Caco-2 (cell line): ENCODE measurements at regions of chr12 and their contacts with region 1.

Region 1: GRCh38 chr12:2845280-2845679 is 10.4 kb upstream of the NRIP2 start:
- DNase-seq: no peak
- H3K4me3 ChIP-seq: no peak overlapping the region
- H3K4me3 Mint-ChIP-seq: no peak overlapping the region
- H3K27ac Mint-ChIP-seq: peak overlapping the region; percentile 12
- H3K4me1 ChIP-seq: peaks cover 24% of the 10 kb centered on the region
- H3K4me1 Mint-ChIP-seq: peaks cover 28% of the 10 kb centered on the region
- H3K27me3 ChIP-seq: no peaks in the 10 kb centered on the region
- H3K27me3 Mint-ChIP-seq: no peaks in the 10 kb centered on the region
- CTCF ChIP-seq: no peak

Region 2: DNA sequence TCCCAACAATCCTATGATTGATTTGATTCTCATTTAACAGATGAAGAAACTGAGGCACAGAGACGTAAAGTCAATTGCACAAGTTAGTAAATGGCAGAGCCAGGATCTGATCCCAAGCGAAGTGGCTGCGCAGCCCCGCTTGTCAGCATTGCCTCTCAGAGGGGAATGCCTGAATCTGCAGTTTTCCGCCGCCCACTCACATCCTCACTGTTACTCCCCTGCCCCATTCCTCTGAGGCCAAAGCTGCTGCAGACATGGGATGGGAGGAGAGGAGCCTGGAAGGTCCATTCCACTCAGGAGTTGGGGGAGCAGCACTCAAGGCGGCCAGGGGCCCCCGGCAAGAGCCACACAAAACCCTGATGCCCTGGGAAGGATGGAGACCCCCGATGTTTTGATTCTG is 11.5 kb before region 1 on chr12:
- CTCF ChIA-PET with region 1: interaction called, 10 read pairs
- POLR2A ChIA-PET with region 1: no interaction called
- intact Hi-C with region 1: no loop called
- DNase-seq: no peak
- H3K4me3 ChIP-seq: no peak overlapping the region
- H3K4me3 Mint-ChIP-seq: no peak overlapping the region
- H3K27ac Mint-ChIP-seq: no peak overlapping the region
- H3K4me1 ChIP-seq: no peaks in the 10 kb centered on the region
- H3K4me1 Mint-ChIP-seq: no peaks in the 10 kb centered on the region
- H3K27me3 ChIP-seq: no peaks in the 10 kb centered on the region
- H3K27me3 Mint-ChIP-seq: peaks cover 5% of the 10 kb centered on the region
- CTCF ChIP-seq: no peak

Region 3: DNA sequence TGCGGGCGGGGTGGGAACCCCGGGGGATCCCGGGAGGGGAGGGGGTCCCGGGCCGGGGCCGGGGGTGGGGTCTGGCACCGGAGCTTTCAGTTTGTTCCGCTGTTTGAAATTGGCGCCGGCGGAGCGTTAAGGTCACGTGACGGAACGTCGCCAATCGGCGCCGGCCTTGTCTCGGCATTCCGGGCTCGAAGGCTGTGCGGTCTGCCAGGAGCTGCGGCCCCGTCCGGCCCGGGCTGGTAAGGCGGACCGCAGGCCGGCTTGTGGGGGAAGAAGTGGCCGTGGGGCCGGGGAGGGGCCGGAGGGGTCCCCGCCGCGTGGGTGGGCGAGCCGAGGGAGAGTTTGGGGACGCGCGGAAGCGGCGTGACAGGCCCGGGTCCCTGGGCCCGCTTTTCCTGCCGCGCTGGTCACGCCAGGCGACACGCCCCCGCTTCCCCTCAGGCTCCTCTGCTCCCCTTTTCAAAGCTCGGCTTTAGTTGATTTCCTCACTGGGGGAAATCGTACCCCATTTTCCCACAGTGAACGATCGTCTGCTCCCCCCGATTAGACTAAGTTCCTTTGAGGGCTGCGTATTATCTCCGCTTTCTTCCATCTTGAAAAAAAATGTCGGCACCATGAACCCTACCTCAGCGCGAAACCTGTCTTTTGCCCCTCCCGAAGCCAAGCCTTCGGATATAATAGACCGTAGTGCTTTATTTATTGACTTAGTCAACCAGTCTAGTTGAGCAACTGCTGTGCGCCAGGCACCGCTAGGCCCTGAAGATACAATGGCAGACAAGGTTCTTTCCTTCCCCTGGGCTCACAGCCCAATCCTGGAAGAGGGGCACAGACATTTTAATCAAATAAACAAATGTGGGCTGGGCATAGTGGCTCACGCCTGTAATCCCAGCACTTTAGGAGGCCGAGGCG is 32.0 kb after region 1 on chr12 and contains the starts of genes FOXM1 and RHNO1:
- CTCF ChIA-PET with region 1: interaction called, 14 read pairs
- POLR2A ChIA-PET with region 1: interaction called, 4 read pairs
- intact Hi-C with region 1: loop called (anchors 2 kb)
- DNase-seq: peak; percentile 94 to 97
- H3K4me3 ChIP-seq: peak within 1 kb of the TSS; percentile 96
- H3K4me3 Mint-ChIP-seq: peak within 1 kb of the TSS; percentile 75
- H3K27ac Mint-ChIP-seq: peak within 1 kb of the TSS; percentile 99
- H3K4me1 ChIP-seq: peaks cover 28% of the 10 kb centered on the region
- H3K4me1 Mint-ChIP-seq: peaks cover 31% of the 10 kb centered on the region
- H3K27me3 ChIP-seq: no peaks in the 10 kb centered on the region
- H3K27me3 Mint-ChIP-seq: no peaks in the 10 kb centered on the region
- CTCF ChIP-seq: peak in 1 of 2 experiments; percentile 28
- total RNA-seq, gene FOXM1: 217 and 222 TPM in 2 replicates
- total RNA-seq, gene RHNO1: 99.1 and 99.8 TPM in 2 replicates

Region 4: DNA sequence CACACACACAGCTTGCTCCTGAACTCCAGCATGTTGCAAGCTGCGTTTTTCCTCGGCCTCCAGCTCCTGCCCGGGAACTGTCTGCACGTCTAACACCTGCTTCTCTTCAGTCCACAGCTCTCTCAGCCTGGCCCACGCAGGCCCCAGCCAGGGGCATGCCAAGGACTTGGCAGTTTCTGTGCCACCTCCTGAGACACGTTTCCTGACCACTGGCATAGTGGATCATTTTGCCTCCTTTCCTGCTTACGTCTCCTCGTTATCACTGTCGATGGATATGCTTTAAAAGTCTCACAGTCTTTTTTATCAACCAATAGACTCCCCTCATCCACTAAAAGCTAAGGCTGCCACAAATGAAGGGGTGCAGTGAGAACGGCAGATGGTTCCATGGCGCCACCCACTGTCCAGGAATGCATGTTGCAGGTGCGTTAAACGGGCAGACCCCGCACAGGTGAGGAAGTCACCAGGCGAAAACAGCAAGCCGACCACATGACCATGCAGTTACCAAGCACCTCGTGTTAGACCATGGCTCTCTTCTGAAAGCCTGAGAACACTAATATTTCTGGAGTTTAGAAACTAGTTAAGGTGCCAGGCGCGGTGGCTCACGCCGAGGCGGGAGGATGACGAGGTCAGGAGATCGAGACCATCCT is 99.2 kb after region 1 on chr12:
- CTCF ChIA-PET with region 1: interaction called, 13 read pairs
- POLR2A ChIA-PET with region 1: no interaction called
- intact Hi-C with region 1: loop called (anchors 1 kb)
- DNase-seq: peak; percentile 83 to 86
- H3K4me3 ChIP-seq: no peak overlapping the region
- H3K4me3 Mint-ChIP-seq: peak overlapping the region; percentile 59
- H3K27ac Mint-ChIP-seq: no peak overlapping the region
- H3K4me1 ChIP-seq: no peaks in the 10 kb centered on the region
- H3K4me1 Mint-ChIP-seq: no peaks in the 10 kb centered on the region
- H3K27me3 ChIP-seq: no peaks in the 10 kb centered on the region
- H3K27me3 Mint-ChIP-seq: no peaks in the 10 kb centered on the region
- CTCF ChIP-seq: peak; percentile 91 to 95

Region 5: GRCh38 chr12:3034067-3034750 is 188.9 kb after region 1 on chr12:
- CTCF ChIA-PET with region 1: interaction called, 9 read pairs
- POLR2A ChIA-PET with region 1: no interaction called
- intact Hi-C with region 1: loop called (anchors 2 kb)
- DNase-seq: peak; percentile 87 to 89
- H3K4me3 ChIP-seq: no peak overlapping the region
- H3K4me3 Mint-ChIP-seq: no peak overlapping the region
- H3K27ac Mint-ChIP-seq: peak overlapping the region; percentile 43
- H3K4me1 ChIP-seq: no peaks in the 10 kb centered on the region
- H3K4me1 Mint-ChIP-seq: no peaks in the 10 kb centered on the region
- H3K27me3 ChIP-seq: no peaks in the 10 kb centered on the region
- H3K27me3 Mint-ChIP-seq: no peaks in the 10 kb centered on the region
- CTCF ChIP-seq: peak; percentile 84 to 96

Region 6: GRCh38 chr12:3041558-3042164 is 196.4 kb after region 1 on chr12:
- CTCF ChIA-PET with region 1: interaction called, 18 read pairs
- POLR2A ChIA-PET with region 1: interaction called, 4 read pairs
- intact Hi-C with region 1: no loop called
- DNase-seq: peak; percentile 84 to 86
- H3K4me3 ChIP-seq: no peak overlapping the region
- H3K4me3 Mint-ChIP-seq: no peak overlapping the region
- H3K27ac Mint-ChIP-seq: no peak overlapping the region
- H3K4me1 ChIP-seq: no peaks in the 10 kb centered on the region
- H3K4me1 Mint-ChIP-seq: no peaks in the 10 kb centered on the region
- H3K27me3 ChIP-seq: no peaks in the 10 kb centered on the region
- H3K27me3 Mint-ChIP-seq: no peaks in the 10 kb centered on the region
- CTCF ChIP-seq: peak; percentile 83 to 84